ENCODE measurements at regions of chr1 and their contacts with region 1.

Region 1: GRCh38 chr1:45359882-45360513 is 19.8 kb upstream of the MUTYH start:
- DNase-seq: peak; percentile 59 to 81 (median 69)
- H3K4me3 ChIP-seq: no peak overlapping the region
- H3K27ac ChIP-seq: peak overlapping the region; percentile 31 to 52
- H3K4me1 ChIP-seq: peaks cover 1% of the 10 kb centered on the region
- H3K27me3 ChIP-seq: no peaks in the 10 kb centered on the region
- CTCF ChIP-seq: peak in 2 of 3 donors; percentile 70 to 78
- EP300 ChIP-seq: no peak
- POLR2A ChIP-seq: no peak

Region 2: GRCh38 chr1:45230540-45230939 is 129.5 kb before region 1 on chr1:
- intact Hi-C with region 1: no loop called
- DNase-seq: no peak
- H3K4me3 ChIP-seq: no peak overlapping the region
- H3K27ac ChIP-seq: no peak overlapping the region
- H3K4me1 ChIP-seq: no peaks in the 10 kb centered on the region
- H3K27me3 ChIP-seq: no peaks in the 10 kb centered on the region
- CTCF ChIP-seq: no peak
- EP300 ChIP-seq: no peak
- POLR2A ChIP-seq: no peak

Region 3: DNA sequence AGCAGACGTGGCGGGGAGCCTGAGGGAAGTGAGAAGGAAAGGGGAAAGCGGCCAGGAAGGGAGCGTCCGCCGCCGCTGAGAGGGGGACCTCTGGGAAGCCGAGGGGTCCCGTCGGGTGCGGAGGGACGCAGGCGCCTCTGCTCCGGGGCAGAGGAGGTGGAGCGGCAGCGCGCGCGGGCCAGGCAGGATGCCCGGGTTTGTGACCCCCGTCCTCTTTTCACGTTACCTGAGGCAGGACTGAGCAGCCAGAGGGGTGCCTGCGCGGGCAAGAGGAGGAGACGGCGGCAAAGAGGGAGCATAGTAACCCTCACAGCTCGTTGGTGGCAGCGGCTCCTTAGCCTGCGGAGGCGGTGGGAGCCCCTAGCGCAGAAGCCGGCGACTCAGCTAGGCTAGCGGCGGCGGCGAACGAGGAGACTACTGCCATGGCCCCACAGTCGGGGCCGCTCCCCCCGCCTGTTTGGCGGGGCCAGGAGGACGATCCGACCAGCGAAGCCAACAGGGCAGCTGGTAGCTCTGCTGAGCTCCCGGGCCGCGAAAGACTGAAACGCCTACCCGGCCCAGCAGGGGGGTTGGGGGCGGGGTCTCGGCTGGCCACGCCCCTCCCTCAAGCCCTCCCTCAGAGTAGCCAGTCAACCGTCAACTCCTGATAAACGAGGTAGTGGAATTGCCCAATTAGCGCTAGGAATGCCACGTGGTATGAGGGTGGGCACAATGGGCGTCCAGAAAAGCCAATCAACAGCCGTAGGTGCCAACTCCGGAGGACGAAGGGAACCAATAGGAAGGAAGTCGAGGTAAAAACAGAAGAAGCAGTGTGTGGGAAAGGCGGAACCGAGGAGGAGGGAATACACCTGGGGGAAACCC is 130.9 kb after region 1 on chr1 and contains the start of gene TESK2:
- intact Hi-C with region 1: loop called (anchors 1 to 5 kb)
- DNase-seq: peak; percentile 95 to 98 (median 98)
- H3K4me3 ChIP-seq: peak within 1 kb of the TSS; percentile 97
- H3K27ac ChIP-seq: peak within 1 kb of the TSS; percentile 34 to 88
- H3K4me1 ChIP-seq: no peaks in the 10 kb centered on the region
- H3K27me3 ChIP-seq: no peaks in the 10 kb centered on the region
- CTCF ChIP-seq: peak in 2 of 3 donors; percentile 32 to 58
- EP300 ChIP-seq: no peak
- POLR2A ChIP-seq: peak; percentile 76
- total RNA-seq, gene TESK2: 6.7 to 12.5 (median 9.7) TPM

Region 4: DNA sequence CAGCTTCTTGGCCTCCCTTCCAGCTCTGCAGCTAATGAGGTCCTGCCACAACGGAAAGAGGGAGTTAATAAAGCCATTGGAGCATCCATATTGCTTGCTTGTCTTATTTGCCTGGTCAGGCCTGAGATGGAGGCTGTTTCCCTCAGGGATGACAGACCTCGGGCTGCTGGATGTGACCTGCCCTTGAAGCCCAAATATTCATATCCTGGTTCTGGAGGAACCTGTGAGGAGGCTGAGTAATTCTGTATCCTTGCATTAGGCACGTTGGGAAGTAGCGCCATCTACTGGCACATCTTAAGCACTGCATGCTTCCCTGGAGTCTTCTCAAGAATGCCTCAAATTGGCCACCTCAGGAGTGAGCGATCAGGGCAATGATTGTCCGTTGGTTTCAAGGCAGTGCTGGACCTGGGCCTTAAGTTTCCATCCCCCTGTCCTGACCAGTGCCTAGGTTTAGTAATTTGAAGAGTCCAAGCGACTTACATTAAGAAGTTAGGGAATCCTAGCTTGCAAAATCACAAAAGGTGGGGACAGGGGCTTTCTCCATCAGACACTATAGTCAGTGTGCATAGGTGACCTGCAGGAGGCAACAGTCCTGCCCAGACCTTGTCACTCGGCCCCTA is 210.1 kb after region 1 on chr1:
- intact Hi-C with region 1: loop called in 2 of 4 experiments (anchors 5 to 10 kb)
- DNase-seq: peak; percentile 60 to 80 (median 70)
- H3K4me3 ChIP-seq: no peak overlapping the region
- H3K27ac ChIP-seq: no peak overlapping the region
- H3K4me1 ChIP-seq: no peaks in the 10 kb centered on the region
- H3K27me3 ChIP-seq: no peaks in the 10 kb centered on the region
- CTCF ChIP-seq: peak; percentile 84 to 89 (median 86)
- EP300 ChIP-seq: no peak
- POLR2A ChIP-seq: no peak

Region 5: DNA sequence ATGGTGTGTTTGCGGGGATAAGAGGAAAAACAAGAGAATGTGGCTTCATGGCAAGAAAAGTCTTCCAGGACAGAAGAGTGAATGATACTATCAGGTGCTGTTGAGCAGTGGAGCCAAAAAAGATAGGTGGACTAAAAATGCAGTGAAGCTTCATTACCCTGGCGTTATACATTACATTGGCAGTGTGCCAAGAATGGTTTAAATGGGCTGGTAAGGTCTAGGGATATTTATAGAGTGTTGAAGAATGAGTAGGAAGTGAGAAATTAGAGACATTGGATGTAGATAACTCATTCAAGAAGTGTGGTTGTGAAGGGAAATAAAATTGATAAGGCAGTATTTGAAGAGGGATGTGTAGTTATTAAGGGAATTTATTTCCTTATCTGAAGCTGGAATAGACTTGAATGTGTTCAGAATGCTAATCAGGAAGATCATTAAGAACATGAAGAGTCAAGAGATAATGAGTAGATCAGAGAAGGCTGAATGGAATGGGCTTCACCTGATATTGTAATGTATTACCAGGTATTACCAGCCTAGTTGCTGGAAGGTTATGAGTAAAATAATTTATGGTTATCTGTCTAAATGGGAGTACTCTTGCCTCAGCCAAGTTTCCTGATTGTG is 516.1 kb after region 1 on chr1:
- intact Hi-C with region 1: loop called in 1 of 4 experiments (anchors 10 kb)
- DNase-seq: no peak
- H3K4me3 ChIP-seq: no peak overlapping the region
- H3K27ac ChIP-seq: no peak overlapping the region
- H3K4me1 ChIP-seq: no peaks in the 10 kb centered on the region
- H3K27me3 ChIP-seq: no peaks in the 10 kb centered on the region
- CTCF ChIP-seq: no peak
- EP300 ChIP-seq: no peak
- POLR2A ChIP-seq: no peak